PC-3 (cell line): ENCODE measurements at regions of chr14 and their contacts with region 1.

Region 1: GRCh38 chr14:103973354-103973753 is 31.0 kb upstream of the RD3L start:
- DNase-seq: no peak
- ATAC-seq: no peak
- H3K4me3 ChIP-seq: no peak overlapping the region
- H3K27ac ChIP-seq: no peak overlapping the region
- H3K4me1 ChIP-seq: no peaks in the 10 kb centered on the region
- H3K27me3 ChIP-seq: no peaks in the 10 kb centered on the region
- CTCF ChIP-seq: no peak

Region 2: DNA sequence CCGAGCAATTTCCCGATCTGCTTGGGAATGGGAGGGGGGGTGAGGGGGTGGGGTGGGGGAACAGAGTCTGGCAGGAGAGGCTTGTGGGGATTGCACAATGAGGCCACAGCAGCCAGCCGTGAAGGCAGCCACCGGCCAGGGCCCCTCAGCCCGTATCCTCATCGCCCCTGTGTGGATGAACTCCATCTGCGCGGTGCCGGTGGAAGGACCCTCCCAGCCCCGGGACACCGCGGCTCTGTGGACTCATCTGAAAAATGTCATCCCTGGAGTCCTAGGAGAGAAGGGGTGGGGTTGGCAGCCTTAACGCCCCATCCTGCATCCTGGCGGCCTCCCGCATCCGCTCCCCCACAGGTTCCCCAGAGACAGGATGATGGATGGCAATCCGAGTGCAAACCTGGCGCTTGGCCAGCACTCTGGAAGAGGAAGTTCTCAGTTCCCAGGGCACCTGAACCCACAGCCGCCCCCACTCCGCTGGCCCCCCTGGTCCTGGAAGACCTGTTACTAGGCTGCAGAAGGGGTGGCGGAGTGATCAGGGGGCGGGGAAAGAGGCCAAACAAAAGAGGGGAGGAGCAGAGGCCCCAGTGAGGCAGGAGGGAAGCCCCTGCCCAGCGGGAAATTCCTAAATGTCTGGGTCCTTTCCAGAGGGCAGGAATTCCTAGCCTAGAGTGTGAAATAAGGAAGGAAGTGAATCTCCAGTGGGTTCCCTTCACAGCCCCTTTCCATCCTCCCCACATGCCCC is 851.3 kb before region 1 on chr14:
- CTCF ChIA-PET with region 1: no interaction called
- POLR2A ChIA-PET with region 1: no interaction called
- intact Hi-C with region 1: no loop called
- DNase-seq: peak; percentile 65
- ATAC-seq: no peak
- H3K4me3 ChIP-seq: no peak overlapping the region
- H3K27ac ChIP-seq: no peak overlapping the region
- H3K4me1 ChIP-seq: peaks cover 32% of the 10 kb centered on the region
- H3K27me3 ChIP-seq: no peaks in the 10 kb centered on the region
- CTCF ChIP-seq: no peak

Region 3: GRCh38 chr14:103808403-103809001 is 164.9 kb before region 1 on chr14:
- CTCF ChIA-PET with region 1: no interaction called
- POLR2A ChIA-PET with region 1: no interaction called
- intact Hi-C with region 1: loop called (anchors 5 kb)
- DNase-seq: peak; percentile 88
- ATAC-seq: peak; percentile 91
- H3K4me3 ChIP-seq: no peak overlapping the region
- H3K27ac ChIP-seq: no peak overlapping the region
- H3K4me1 ChIP-seq: no peaks in the 10 kb centered on the region
- H3K27me3 ChIP-seq: no peaks in the 10 kb centered on the region
- CTCF ChIP-seq: peak; percentile 89

Region 4: GRCh38 chr14:104001003-104001402 is 27.6 kb after region 1 on chr14:
- CTCF ChIA-PET with region 1: no interaction called
- POLR2A ChIA-PET with region 1: no interaction called
- intact Hi-C with region 1: no loop called
- DNase-seq: peak; percentile 31
- ATAC-seq: peak; percentile 67; the same call in 1 of the 2 replicates
- H3K4me3 ChIP-seq: no peak overlapping the region
- H3K27ac ChIP-seq: no peak overlapping the region
- H3K4me1 ChIP-seq: peaks cover 14% of the 10 kb centered on the region
- H3K27me3 ChIP-seq: no peaks in the 10 kb centered on the region
- CTCF ChIP-seq: peak; percentile 62